ENCODE measurements at regions of chr11 and their contacts with region 1.

Region 1: GRCh38 chr11:65888163-65888814 is at the start of gene FIBP:
- DNase-seq: peak; percentile 75
- H3K4me3 ChIP-seq: peak within 1 kb of the TSS; percentile 94
- CTCF ChIP-seq: no peak

Region 2: GRCh38 chr11:65459552-65459951 is 428.7 kb before region 1 on chr11:
- CTCF ChIA-PET with region 1: no interaction called
- POLR2A ChIA-PET with region 1: no interaction called
- DNase-seq: no peak
- H3K4me3 ChIP-seq: no peak overlapping the region
- CTCF ChIP-seq: no peak

Region 3: GRCh38 chr11:65859200-65859811 is 29.0 kb before region 1 on chr11:
- CTCF ChIA-PET with region 1: interaction called, 83 read pairs
- POLR2A ChIA-PET with region 1: interaction called, 67 read pairs
- DNase-seq: peak; percentile 88
- H3K4me3 ChIP-seq: peak overlapping the region; percentile 95
- CTCF ChIP-seq: peak; percentile 25

Region 4: GRCh38 chr11:65911682-65912568 is 23.6 kb after region 1 on chr11:
- CTCF ChIA-PET with region 1: interaction called, 394 read pairs
- POLR2A ChIA-PET with region 1: interaction called, 127 read pairs
- DNase-seq: no peak
- H3K4me3 ChIP-seq: no peak overlapping the region
- CTCF ChIP-seq: peak; percentile 39

Region 5: GRCh38 chr11:65941720-65942310 is 53.5 kb after region 1 on chr11:
- CTCF ChIA-PET with region 1: interaction called, 17 read pairs
- POLR2A ChIA-PET with region 1: no interaction called
- DNase-seq: no peak
- H3K4me3 ChIP-seq: no peak overlapping the region
- CTCF ChIP-seq: no peak

Region 6: DNA sequence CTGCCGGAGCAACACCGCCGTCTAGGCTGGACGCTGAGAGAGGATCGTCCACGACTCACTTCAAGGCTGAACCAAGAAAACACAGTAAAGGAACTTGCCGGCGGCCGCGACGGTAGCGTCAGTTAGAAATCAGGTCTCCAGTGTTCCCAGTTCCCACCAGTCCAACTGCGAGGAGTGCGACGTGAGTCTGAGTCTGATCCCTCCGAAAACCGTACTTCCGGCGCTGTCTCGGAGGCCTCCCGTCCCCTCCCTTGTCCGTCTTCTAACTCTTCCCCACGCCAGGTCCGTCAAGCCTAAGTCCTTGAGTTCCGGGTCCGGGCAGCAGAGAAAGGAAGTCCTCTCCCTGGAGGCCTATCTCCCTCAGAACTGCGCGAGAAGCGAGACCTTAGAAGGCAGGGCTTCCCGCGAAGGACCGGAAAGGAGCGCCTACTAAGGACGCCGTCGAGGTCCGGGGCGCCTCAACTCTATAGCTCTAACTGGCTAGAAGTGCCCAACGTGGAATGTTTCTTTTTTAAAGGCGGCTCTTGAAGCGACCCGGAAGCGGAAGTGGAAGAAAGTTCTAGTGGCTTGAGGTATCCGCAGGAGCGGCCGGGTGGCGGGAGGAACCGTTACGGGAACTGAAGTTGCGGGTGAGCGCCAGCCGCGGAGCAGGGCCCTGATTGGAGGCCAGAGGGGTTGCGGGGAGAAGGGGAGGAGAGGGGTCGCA is 113.8 kb after region 1 on chr11 and contains the starts of genes BANF1 and EIF1AD:
- CTCF ChIA-PET with region 1: interaction called, 1,090 read pairs
- POLR2A ChIA-PET with region 1: interaction called, 3 read pairs
- DNase-seq: peak; percentile 88
- H3K4me3 ChIP-seq: peak within 1 kb of the TSS; percentile 94
- CTCF ChIP-seq: no peak

Region 7: GRCh38 chr11:66045177-66045639 is 156.9 kb after region 1 on chr11:
- CTCF ChIA-PET with region 1: interaction called, 42 read pairs
- POLR2A ChIA-PET with region 1: no interaction called
- DNase-seq: no peak
- H3K4me3 ChIP-seq: no peak overlapping the region
- CTCF ChIP-seq: peak; percentile 93